GM12878 (cell line): ENCODE measurements at regions of chr15 and their contacts with region 1.

Region 1: DNA sequence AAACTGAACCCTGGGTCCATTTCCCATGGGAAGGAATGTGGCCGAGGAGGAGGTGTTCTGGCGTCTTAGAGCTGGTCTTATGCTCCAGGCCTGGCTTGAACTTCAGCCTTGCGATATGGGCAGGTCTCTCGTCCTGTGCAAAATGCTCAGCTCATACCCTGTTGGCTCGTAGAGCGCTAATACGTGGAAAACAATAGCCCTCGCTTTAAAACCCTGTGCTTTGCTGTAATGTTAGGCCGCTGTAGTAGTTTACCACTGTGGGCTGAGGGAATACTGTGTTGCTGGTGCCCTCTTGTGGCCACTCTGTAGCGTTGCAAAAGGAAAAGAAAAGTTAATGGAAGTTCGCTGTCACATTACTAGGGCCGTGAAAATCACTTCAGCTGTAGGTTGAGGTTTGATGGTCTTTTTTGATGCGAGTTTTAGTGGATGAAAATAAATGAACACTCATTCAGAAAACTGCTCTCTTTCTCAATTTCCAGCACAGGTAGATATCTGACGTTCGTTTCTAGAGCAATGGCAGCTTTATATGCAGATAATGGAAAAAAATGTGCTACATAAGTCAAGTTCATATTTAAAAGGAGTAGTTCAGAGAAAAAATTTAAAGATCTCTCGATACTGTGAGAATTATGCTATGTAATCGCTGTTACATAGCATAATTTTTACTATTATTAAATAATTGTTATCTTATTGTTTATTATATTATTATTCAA is 92.9 kb downstream of the MCTP2 start:
- DNase-seq: peak; percentile 45
- ATAC-seq: peak; percentile 96
- H3K4me3 ChIP-seq: no peak overlapping the region
- H3K27ac ChIP-seq: no peak overlapping the region
- H3K4me1 ChIP-seq: no peaks in the 10 kb centered on the region
- H3K27me3 ChIP-seq: no peaks in the 10 kb centered on the region
- CTCF ChIP-seq: peak; percentile 86 to 97 (median 89)
- EP300 ChIP-seq: no peak
- POLR2A ChIP-seq: no peak
- RAD21 ChIP-seq: peak; percentile 99

Region 2: DNA sequence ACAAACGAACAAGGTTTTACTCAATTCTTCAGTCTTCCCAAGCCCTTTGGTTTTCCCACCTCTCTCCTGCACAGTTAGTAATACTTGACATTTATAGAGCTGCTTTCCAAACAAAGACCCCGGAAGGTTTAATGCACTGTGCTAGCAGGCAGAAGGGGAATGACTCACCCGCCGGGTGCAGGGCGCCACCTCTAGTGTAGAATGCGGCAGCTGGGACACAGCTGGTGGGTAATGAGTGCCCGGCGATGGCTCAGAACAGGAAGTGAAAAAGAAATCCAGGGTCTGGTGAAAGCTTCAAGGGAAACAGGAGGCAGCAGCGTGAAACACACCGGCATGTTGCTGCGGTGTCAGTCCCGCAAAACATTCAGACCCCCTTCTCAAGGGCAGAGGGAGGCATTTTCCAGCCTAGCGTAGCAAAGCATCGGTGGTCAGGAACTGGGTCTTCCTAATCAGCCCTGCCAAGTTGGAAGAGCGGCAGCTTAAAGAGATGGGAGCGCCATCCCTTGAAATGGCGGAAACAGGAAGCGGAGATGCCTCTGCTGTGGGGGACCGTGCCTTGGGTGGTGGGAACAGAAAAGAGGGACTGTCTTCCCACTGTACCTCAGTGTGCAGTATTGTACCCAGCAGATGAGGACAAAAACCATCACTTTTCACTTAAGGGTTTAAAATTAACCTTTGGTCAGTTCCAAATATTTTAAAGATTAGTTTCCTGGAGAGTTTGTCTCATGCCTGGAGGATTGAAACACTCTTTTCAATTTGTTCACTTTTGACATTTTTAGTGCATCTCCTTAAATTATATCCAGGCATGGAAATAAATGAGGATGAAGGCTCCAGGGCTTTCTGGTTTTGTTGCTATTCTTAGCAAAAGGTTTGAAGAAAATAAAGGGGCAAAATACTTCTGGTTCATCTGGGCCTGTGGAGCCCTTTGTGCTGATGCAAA is 253.6 kb before region 1 on chr15:
- CTCF ChIA-PET with region 1: no interaction called
- POLR2A ChIA-PET with region 1: no interaction called
- RAD21 ChIA-PET with region 1: no interaction called
- SMC1A ChIA-PET with region 1: no interaction called
- in situ Hi-C with region 1: no loop called
- intact Hi-C with region 1: no loop called
- DNase-seq: no peak
- ATAC-seq: no peak
- H3K4me3 ChIP-seq: no peak overlapping the region
- H3K27ac ChIP-seq: no peak overlapping the region
- H3K4me1 ChIP-seq: no peaks in the 10 kb centered on the region
- H3K27me3 ChIP-seq: no peaks in the 10 kb centered on the region; a peak in 1 of 4 replicates
- CTCF ChIP-seq: no peak
- EP300 ChIP-seq: no peak
- POLR2A ChIP-seq: no peak
- RAD21 ChIP-seq: no peak

Region 3: DNA sequence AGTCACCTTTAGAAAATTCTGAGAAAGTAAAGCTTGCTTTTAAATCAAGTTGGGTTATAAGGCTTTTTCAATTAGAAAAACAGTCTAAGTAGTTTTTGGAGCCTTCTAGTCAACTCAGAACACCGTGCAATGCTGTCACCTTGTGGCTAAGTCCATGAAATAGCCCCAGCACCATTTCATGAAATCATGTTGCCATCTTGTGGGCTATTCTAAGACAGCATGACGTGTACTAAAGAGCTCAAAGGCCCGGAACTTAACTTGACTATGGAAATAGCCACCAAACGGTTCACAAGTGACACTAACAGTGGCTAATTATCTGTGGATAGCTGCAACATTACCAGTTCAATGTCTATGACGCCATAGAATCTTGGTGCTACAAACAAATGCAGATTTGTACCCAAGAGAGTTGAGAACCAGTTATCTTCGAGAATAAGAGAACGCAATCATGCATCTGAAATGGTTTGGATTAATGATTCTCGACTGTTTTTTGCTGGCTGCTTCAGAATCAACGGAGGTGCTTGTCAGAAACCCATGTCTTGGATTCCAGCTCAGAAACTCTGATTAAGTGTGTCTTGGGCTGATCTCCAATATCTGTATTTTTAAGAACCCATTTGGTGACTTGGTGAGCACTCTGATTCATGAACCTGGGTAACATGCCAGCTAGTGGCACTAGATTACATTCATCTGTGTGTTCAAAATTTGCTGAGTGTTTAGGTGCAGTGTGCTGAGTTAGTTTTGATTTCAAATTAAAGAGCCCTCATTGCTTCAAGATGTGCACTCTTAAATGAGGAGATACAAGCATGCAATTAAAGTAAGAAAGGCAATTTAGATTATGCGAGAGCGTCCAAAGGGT is 204.1 kb before region 1 on chr15:
- CTCF ChIA-PET with region 1: interaction called, 12 read pairs
- POLR2A ChIA-PET with region 1: no interaction called
- RAD21 ChIA-PET with region 1: interaction called, 7 read pairs
- SMC1A ChIA-PET with region 1: interaction called, 6 read pairs
- in situ Hi-C with region 1: no loop called
- intact Hi-C with region 1: no loop called
- DNase-seq: peak; percentile 49
- ATAC-seq: peak; percentile 100
- H3K4me3 ChIP-seq: no peak overlapping the region
- H3K27ac ChIP-seq: no peak overlapping the region
- H3K4me1 ChIP-seq: no peaks in the 10 kb centered on the region
- H3K27me3 ChIP-seq: no peaks in the 10 kb centered on the region
- CTCF ChIP-seq: peak; percentile 85 to 100 (median 94); a peak in 5 of 6 replicates
- EP300 ChIP-seq: no peak
- POLR2A ChIP-seq: no peak
- RAD21 ChIP-seq: peak; percentile 97

Region 4: DNA sequence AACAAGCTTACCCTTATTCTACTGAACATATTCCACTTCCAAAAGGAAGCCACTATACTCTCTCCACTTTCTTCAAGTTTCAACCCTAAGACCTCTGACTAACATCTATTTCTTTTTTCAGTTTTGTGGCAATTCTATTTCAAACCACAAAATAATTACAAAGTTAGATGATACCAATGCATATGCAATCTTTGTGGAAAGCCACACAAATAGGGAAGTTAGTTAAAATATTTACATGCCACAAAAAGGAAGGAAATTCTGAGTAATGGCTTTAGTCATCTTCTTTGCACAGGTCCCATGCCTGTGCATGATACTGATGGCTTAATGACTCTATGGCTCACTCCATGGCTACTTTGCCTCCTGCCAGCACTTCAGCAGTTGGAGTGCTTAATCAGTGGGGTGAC is 149.9 kb before region 1 on chr15:
- CTCF ChIA-PET with region 1: interaction called, 32 read pairs
- POLR2A ChIA-PET with region 1: no interaction called
- RAD21 ChIA-PET with region 1: interaction called, 6 read pairs
- SMC1A ChIA-PET with region 1: interaction called, 17 read pairs
- in situ Hi-C with region 1: no loop called
- intact Hi-C with region 1: no loop called
- DNase-seq: peak; percentile 30
- ATAC-seq: peak; percentile 95
- H3K4me3 ChIP-seq: no peak overlapping the region
- H3K27ac ChIP-seq: no peak overlapping the region
- H3K4me1 ChIP-seq: no peaks in the 10 kb centered on the region
- H3K27me3 ChIP-seq: no peaks in the 10 kb centered on the region
- CTCF ChIP-seq: no peak
- EP300 ChIP-seq: 0 out of 4 replicates have a peak, but pooled peaks have one; percentile 27 to 38
- POLR2A ChIP-seq: no peak
- RAD21 ChIP-seq: no peak

Region 5: GRCh38 chr15:94212291-94212690 is 112.0 kb before region 1 on chr15:
- CTCF ChIA-PET with region 1: no interaction called
- POLR2A ChIA-PET with region 1: no interaction called
- RAD21 ChIA-PET with region 1: no interaction called
- SMC1A ChIA-PET with region 1: no interaction called
- in situ Hi-C with region 1: no loop called
- intact Hi-C with region 1: no loop called
- DNase-seq: no peak
- ATAC-seq: no peak
- H3K4me3 ChIP-seq: no peak overlapping the region
- H3K27ac ChIP-seq: no peak overlapping the region
- H3K4me1 ChIP-seq: no peaks in the 10 kb centered on the region
- H3K27me3 ChIP-seq: no peaks in the 10 kb centered on the region
- CTCF ChIP-seq: no peak
- EP300 ChIP-seq: no peak
- POLR2A ChIP-seq: no peak
- RAD21 ChIP-seq: no peak

Region 6: GRCh38 chr15:94238539-94239118 is 85.6 kb before region 1 on chr15:
- CTCF ChIA-PET with region 1: interaction called, 90 read pairs
- POLR2A ChIA-PET with region 1: interaction called, 5 read pairs
- RAD21 ChIA-PET with region 1: interaction called, 80 read pairs
- SMC1A ChIA-PET with region 1: interaction called, 121 read pairs
- in situ Hi-C with region 1: no loop called
- intact Hi-C with region 1: loop called (anchors 5 kb)
- DNase-seq: no peak
- ATAC-seq: peak; percentile 85
- H3K4me3 ChIP-seq: no peak overlapping the region
- H3K27ac ChIP-seq: no peak overlapping the region
- H3K4me1 ChIP-seq: 0 out of 2 replicates have a peak, but pooled peaks cover 5% of the 10 kb centered on the region
- H3K27me3 ChIP-seq: no peaks in the 10 kb centered on the region
- CTCF ChIP-seq: no peak
- EP300 ChIP-seq: peak in 1 of 2 experiments; percentile 25; a peak in 1 of 4 replicates
- POLR2A ChIP-seq: no peak
- RAD21 ChIP-seq: no peak

Region 7: GRCh38 chr15:94287794-94288246 is 36.5 kb before region 1 on chr15:
- CTCF ChIA-PET with region 1: interaction called, 34 read pairs
- POLR2A ChIA-PET with region 1: no interaction called
- RAD21 ChIA-PET with region 1: interaction called, 34 read pairs
- SMC1A ChIA-PET with region 1: interaction called, 55 read pairs
- in situ Hi-C with region 1: no loop called
- intact Hi-C with region 1: no loop called
- DNase-seq: peak; percentile 66
- ATAC-seq: peak; percentile 97
- H3K4me3 ChIP-seq: no peak overlapping the region
- H3K27ac ChIP-seq: peak overlapping the region; percentile 47; the same call in 1 of the 2 replicates
- H3K4me1 ChIP-seq: peaks cover 15% of the 10 kb centered on the region
- H3K27me3 ChIP-seq: no peaks in the 10 kb centered on the region
- CTCF ChIP-seq: peak in 1 of 3 experiments; percentile 18; a peak in 1 of 6 replicates
- EP300 ChIP-seq: peak; percentile 74 to 91; a peak in 3 of 4 replicates
- POLR2A ChIP-seq: no peak
- RAD21 ChIP-seq: no peak

Region 8: DNA sequence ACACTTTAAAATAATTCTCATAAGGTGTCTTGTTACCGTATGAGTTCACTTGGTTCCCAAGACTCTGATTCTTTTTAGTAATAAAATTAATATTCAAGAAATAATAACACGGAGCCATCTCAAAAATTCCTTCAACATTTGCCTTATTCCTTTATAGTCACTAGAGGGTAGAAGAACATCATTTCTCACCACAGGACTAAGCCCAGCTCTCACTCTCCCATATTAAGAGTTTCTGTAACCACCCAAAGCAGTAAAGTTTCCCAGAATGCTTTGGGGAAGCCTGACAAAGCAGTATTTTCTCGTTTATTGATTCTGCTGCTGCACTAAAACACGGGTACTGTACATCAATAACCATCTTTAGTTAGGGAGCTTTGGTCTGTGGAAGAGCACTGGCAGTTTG is 22.0 kb after region 1 on chr15:
- CTCF ChIA-PET with region 1: interaction called, 7 read pairs
- POLR2A ChIA-PET with region 1: no interaction called
- RAD21 ChIA-PET with region 1: interaction called, 3 read pairs
- SMC1A ChIA-PET with region 1: interaction called, 12 read pairs
- in situ Hi-C with region 1: no loop called
- intact Hi-C with region 1: no loop called
- DNase-seq: no peak
- ATAC-seq: no peak
- H3K4me3 ChIP-seq: no peak overlapping the region
- H3K27ac ChIP-seq: no peak overlapping the region
- H3K4me1 ChIP-seq: no peaks in the 10 kb centered on the region
- H3K27me3 ChIP-seq: no peaks in the 10 kb centered on the region
- CTCF ChIP-seq: no peak
- EP300 ChIP-seq: no peak
- POLR2A ChIP-seq: no peak
- RAD21 ChIP-seq: no peak

Region 9: GRCh38 chr15:94385441-94385840 is 61.2 kb after region 1 on chr15:
- CTCF ChIA-PET with region 1: no interaction called
- POLR2A ChIA-PET with region 1: no interaction called
- RAD21 ChIA-PET with region 1: no interaction called
- SMC1A ChIA-PET with region 1: no interaction called
- in situ Hi-C with region 1: no loop called
- intact Hi-C with region 1: no loop called
- DNase-seq: no peak
- ATAC-seq: no peak
- H3K4me3 ChIP-seq: no peak overlapping the region
- H3K27ac ChIP-seq: no peak overlapping the region
- H3K4me1 ChIP-seq: peaks cover 4% of the 10 kb centered on the region; the same call in 1 of the 2 replicates
- H3K27me3 ChIP-seq: no peaks in the 10 kb centered on the region
- CTCF ChIP-seq: no peak
- EP300 ChIP-seq: no peak
- POLR2A ChIP-seq: no peak
- RAD21 ChIP-seq: no peak